ENCODE measurements at regions of chr16 and their contacts with region 1.

Region 1: DNA sequence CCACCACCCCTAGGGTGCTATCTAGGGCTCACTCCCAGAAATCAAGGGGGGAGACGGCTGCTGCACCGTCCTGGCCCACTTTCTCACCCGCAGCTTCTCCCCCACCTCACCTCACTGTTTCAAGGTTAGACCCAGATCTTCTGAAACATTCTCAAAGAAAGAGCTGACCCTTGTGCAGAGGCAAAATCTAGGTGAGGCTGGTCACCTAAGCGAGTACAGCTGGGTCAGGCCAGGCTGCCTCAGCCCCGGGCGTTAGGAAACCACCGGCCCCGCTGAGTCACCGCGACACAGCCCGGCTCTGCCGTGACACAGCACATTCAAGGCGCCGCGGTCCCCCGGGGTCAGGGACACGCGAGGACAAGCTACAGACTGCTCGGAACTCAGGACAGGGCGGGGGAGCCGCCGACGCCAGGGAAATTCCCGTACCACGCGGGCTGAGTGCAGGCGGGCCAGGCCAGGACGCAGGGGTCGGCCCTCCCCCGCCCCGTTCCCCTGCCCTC is 27.1 kb downstream of the GNPTG start:
- DNase-seq: peak; percentile 80 to 93 (median 86)
- ATAC-seq: peak; percentile 93
- H3K4me3 ChIP-seq: peak overlapping the region; percentile 76
- H3K27ac ChIP-seq: peak overlapping the region; percentile 100
- H3K4me1 ChIP-seq: peaks cover 19 to 74% of the 10 kb centered on the region in 2 experiments; a peak in 4 of 5 replicates
- H3K27me3 ChIP-seq: no peaks in the 10 kb centered on the region
- CTCF ChIP-seq: no peak
- EP300 ChIP-seq: peak; percentile 74
- POLR2A ChIP-seq: no peak; the same call in none of the 2 replicates
- RAD21 ChIP-seq: no peak

Region 2: DNA sequence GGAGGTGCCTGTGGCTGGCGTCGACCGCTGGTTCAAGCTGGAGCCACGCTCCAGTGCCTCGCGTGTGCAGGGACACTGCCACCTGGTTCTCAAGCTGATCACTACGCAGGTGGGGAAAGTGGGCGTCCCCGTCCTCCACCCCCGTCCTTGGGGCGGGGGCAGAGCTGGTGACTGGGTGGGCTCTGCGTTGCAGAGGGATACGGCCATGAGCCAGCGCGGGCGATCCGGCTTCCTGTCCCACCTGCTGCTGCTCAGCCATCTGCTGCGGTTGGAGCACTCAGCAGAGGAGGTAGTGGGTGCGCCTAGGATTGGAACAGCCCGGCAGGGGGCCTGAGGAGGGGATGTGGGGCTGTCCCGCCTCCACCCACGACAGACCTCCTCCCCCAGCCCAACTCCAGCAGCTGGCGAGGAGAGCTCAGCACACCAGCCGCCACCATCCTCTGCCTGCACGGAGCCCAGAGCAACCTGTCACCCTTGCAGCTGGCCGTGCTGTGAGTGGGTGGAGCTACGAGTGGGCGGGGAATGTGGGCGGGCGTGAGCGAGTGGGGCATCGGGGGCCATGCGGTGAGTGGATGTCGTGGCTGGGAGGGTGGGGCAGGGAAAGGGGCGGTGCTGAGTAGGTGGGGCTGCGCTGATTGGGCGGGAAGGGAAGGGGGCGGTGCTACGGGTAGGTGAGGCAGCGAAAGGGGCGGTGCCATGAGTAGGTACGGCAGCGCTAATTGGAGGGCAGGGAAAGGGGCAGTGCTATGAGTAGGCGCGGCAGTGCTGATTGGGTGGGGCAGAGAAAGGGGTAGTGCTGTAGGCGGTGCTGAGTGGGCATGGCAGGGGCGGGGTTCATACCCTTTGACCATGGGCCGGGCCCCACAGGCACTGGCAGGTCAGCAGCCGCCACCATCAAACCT is 36.1 kb before region 1 on chr16:
- CTCF ChIA-PET with region 1: no interaction called
- POLR2A ChIA-PET with region 1: interaction called, 21 read pairs
- in situ Hi-C with region 1: no loop called
- intact Hi-C with region 1: no loop called
- DNase-seq: peak; percentile 98 to 100 (median 100)
- ATAC-seq: peak; percentile 98
- H3K4me3 ChIP-seq: no peak overlapping the region
- H3K27ac ChIP-seq: no peak overlapping the region
- H3K4me1 ChIP-seq: peaks cover 6 to 89% of the 10 kb centered on the region in 2 experiments
- H3K27me3 ChIP-seq: no peaks in the 10 kb centered on the region
- CTCF ChIP-seq: no peak
- EP300 ChIP-seq: no peak
- POLR2A ChIP-seq: no peak
- RAD21 ChIP-seq: no peak

Region 3: DNA sequence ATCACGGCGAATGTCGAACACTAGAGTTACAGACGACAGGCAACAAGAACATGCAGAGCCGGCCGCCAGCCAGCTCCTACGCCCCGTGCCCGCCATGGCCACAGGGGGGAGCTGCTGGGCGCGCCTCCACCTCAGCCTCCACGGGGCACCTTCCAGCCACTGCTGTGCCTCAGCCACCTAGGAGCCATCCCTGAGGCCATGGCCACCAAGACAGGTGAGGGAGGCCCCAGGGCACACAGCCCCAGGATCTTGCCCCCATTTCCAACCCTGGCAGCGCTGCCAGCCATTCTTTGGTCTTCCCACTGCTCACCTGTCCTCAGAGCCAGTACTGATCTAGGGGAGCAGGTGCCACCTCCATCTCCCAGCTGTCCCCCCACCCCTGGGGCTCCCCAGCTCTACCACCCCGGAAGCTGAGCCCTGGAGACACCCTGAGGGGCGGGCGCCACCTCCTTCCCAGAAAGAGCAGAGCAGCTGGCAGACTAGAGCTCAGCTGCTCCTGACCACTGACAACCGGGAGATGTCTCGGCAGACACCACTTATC is 15.3 kb before region 1 on chr16:
- CTCF ChIA-PET with region 1: no interaction called
- POLR2A ChIA-PET with region 1: interaction called, 73 read pairs
- in situ Hi-C with region 1: no loop called
- intact Hi-C with region 1: no loop called
- DNase-seq: peak; percentile 71 to 83 (median 77)
- ATAC-seq: peak; percentile 99
- H3K4me3 ChIP-seq: no peak overlapping the region
- H3K27ac ChIP-seq: no peak overlapping the region
- H3K4me1 ChIP-seq: peaks cover 0 to 48% of the 10 kb centered on the region in 2 experiments; a peak in 2 of 5 replicates
- H3K27me3 ChIP-seq: no peaks in the 10 kb centered on the region
- CTCF ChIP-seq: peak; percentile 79 to 94 (median 91)
- EP300 ChIP-seq: no peak
- POLR2A ChIP-seq: no peak
- RAD21 ChIP-seq: peak; percentile 64 to 81

Region 4: GRCh38 chr16:1390239-1390779 is 11.5 kb after region 1 on chr16:
- CTCF ChIA-PET with region 1: no interaction called
- POLR2A ChIA-PET with region 1: interaction called, 48 read pairs
- in situ Hi-C with region 1: no loop called
- intact Hi-C with region 1: no loop called
- DNase-seq: no peak
- ATAC-seq: no peak
- H3K4me3 ChIP-seq: no peak overlapping the region
- H3K27ac ChIP-seq: no peak overlapping the region
- H3K4me1 ChIP-seq: peaks cover 0 to 36% of the 10 kb centered on the region in 2 experiments; a peak in 2 of 5 replicates
- H3K27me3 ChIP-seq: no peaks in the 10 kb centered on the region
- CTCF ChIP-seq: no peak
- EP300 ChIP-seq: no peak
- POLR2A ChIP-seq: no peak
- RAD21 ChIP-seq: no peak

Region 5: GRCh38 chr16:1420111-1420540 is 41.3 kb after region 1 on chr16:
- CTCF ChIA-PET with region 1: no interaction called
- POLR2A ChIA-PET with region 1: interaction called, 19 read pairs
- in situ Hi-C with region 1: no loop called
- intact Hi-C with region 1: no loop called
- DNase-seq: peak in 1 of 4 experiments; percentile 42
- ATAC-seq: peak; percentile 29
- H3K4me3 ChIP-seq: peak overlapping the region; percentile 94
- H3K27ac ChIP-seq: peak overlapping the region; percentile 90
- H3K4me1 ChIP-seq: peaks cover 7 to 32% of the 10 kb centered on the region in 2 experiments; a peak in 3 of 5 replicates
- H3K27me3 ChIP-seq: no peaks in the 10 kb centered on the region
- CTCF ChIP-seq: 0 out of 6 replicates have a peak, but pooled peaks of 1 of the 3 experiments have one; percentile 2
- EP300 ChIP-seq: no peak
- POLR2A ChIP-seq: no peak
- RAD21 ChIP-seq: no peak

Measured in K562 (cell line).